Heart right ventricle (tissue), 16 donors: ENCODE measurements at regions of chrX and their contacts with region 1.

Region 1: GRCh38 chrX:131802835-131803626 is 220.1 kb upstream of the STK26 start:
- DNase-seq: peak; percentile 17 to 24
- ATAC-seq: peak; percentile 30 to 92 (median 78)
- H3K4me3 ChIP-seq: peak overlapping the region in 8 of 10 donors; percentile 5 to 48 (median 22)
- H3K27ac ChIP-seq: peak overlapping the region in 3 of 10 donors; percentile 44 to 54 (median 53)
- H3K4me1 ChIP-seq: peaks cover 0 to 12% (median 0%) of the 10 kb centered on the region in 9 donors
- H3K27me3 ChIP-seq: peaks cover 0 to 29% (median 0%) of the 10 kb centered on the region in 7 donors
- CTCF ChIP-seq: peak in 8 of 9 donors; percentile 21 to 69 (median 38)

Region 2: GRCh38 chrX:131792789-131793462 is 10.1 kb before region 1 on chrX:
- intact Hi-C with region 1: loop called in 1 of 10 experiments (anchors 1 kb)
- DNase-seq: peak; percentile 17 to 61
- ATAC-seq: peak; percentile 55 to 98 (median 84)
- H3K4me3 ChIP-seq: peak overlapping the region in 9 of 10 donors; percentile 19 to 53 (median 30)
- H3K27ac ChIP-seq: peak overlapping the region in 8 of 10 donors; percentile 19 to 86 (median 56)
- H3K4me1 ChIP-seq: peaks cover 0 to 6% (median 0%) of the 10 kb centered on the region in 9 donors
- H3K27me3 ChIP-seq: peaks cover 0 to 60% (median 0%) of the 10 kb centered on the region in 7 donors
- CTCF ChIP-seq: peak in 5 of 9 donors; percentile 16 to 57 (median 36)

Region 3: GRCh38 chrX:132009350-132009749 is 206.3 kb after region 1 on chrX:
- intact Hi-C with region 1: no loop called
- DNase-seq: no peak
- ATAC-seq: no peak
- H3K4me3 ChIP-seq: no peak overlapping the region
- H3K27ac ChIP-seq: no peak overlapping the region
- H3K4me1 ChIP-seq: no peaks in the 10 kb centered on the region
- H3K27me3 ChIP-seq: peaks cover 0 to 56% (median 0%) of the 10 kb centered on the region in 7 donors
- CTCF ChIP-seq: no peak

Region 4: DNA sequence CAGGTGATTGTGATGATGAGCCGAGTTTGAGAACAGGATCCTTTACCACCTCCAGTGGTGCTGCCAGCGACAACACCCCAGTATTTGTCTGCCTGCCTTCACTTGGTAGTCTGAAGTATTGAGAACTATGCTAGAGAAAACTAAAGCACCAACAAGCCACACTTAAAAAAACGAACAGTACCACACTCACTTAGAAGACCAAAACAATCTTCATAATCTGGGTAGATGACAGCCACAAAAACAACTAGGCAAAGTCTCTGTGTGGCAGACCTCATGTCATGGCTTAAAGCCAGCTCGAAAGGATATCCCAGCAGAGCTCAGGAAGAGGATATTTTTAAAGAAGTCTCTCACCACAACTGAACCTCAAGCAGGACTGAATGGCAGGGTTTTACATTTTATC is 1946.3 kb after region 1 on chrX:
- intact Hi-C with region 1: no loop called
- DNase-seq: no peak
- ATAC-seq: no peak
- H3K4me3 ChIP-seq: no peak overlapping the region
- H3K27ac ChIP-seq: no peak overlapping the region
- H3K4me1 ChIP-seq: no peaks in the 10 kb centered on the region
- H3K27me3 ChIP-seq: peaks cover 0 to 51% (median 0%) of the 10 kb centered on the region in 7 donors
- CTCF ChIP-seq: no peak